MCF 10A (cell line): ENCODE measurements at regions of chr12 and their contacts with region 1.

Region 1: GRCh38 chr12:117212563-117213190 is 22.4 kb upstream of the FBXO21 start:
- DNase-seq: peak; percentile 86
- H3K4me3 Mint-ChIP-seq: no peak overlapping the region
- H3K27ac Mint-ChIP-seq: no peak overlapping the region
- H3K4me1 Mint-ChIP-seq: no peaks in the 10 kb centered on the region
- H3K27me3 Mint-ChIP-seq: peaks cover 70% of the 10 kb centered on the region
- CTCF ChIP-seq: peak; percentile 82

Region 2: DNA sequence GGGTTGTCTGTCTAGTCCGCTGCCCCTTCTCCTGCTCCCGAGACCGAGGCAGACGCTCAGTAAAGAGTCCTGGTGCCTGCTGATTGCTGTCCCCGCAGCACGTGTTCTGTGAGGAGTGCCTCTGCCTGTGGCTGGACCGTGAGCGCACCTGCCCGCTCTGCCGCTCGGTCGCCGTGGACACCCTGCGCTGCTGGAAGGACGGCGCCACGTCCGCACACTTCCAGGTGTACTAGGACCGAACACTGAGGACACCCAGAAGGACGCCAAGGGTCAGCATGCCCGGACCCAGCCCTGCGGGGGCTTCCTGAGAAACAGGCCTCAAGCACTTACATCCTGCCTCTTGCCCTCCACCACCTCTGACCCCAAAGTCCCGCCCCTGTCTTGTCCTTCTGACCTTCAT is 363.5 kb before region 1 on chr12:
- CTCF ChIA-PET with region 1: no interaction called
- POLR2A ChIA-PET with region 1: no interaction called
- intact Hi-C with region 1: no loop called
- DNase-seq: no peak
- H3K4me3 Mint-ChIP-seq: no peak overlapping the region
- H3K27ac Mint-ChIP-seq: no peak overlapping the region
- H3K4me1 Mint-ChIP-seq: no peaks in the 10 kb centered on the region
- H3K27me3 Mint-ChIP-seq: no peaks in the 10 kb centered on the region
- CTCF ChIP-seq: no peak

Region 3: GRCh38 chr12:116910645-116911451 is 301.8 kb before region 1 on chr12 and contains the start of gene FBXW8:
- CTCF ChIA-PET with region 1: no interaction called
- POLR2A ChIA-PET with region 1: no interaction called
- intact Hi-C with region 1: no loop called
- DNase-seq: peak; percentile 62
- H3K4me3 Mint-ChIP-seq: peak within 1 kb of the TSS; percentile 74
- H3K27ac Mint-ChIP-seq: peak within 1 kb of the TSS; percentile 40
- H3K4me1 Mint-ChIP-seq: peaks cover 1% of the 10 kb centered on the region
- H3K27me3 Mint-ChIP-seq: no peaks in the 10 kb centered on the region
- CTCF ChIP-seq: no peak
- total RNA-seq, gene FBXW8: 24.2 and 24.8 TPM in 2 replicates

Region 4: GRCh38 chr12:117202556-117202955 is 10.1 kb before region 1 on chr12:
- CTCF ChIA-PET with region 1: interaction called, 58 read pairs
- POLR2A ChIA-PET with region 1: no interaction called
- intact Hi-C with region 1: no loop called
- DNase-seq: no peak
- H3K4me3 Mint-ChIP-seq: no peak overlapping the region
- H3K27ac Mint-ChIP-seq: no peak overlapping the region
- H3K4me1 Mint-ChIP-seq: no peaks in the 10 kb centered on the region
- H3K27me3 Mint-ChIP-seq: peaks cover 3% of the 10 kb centered on the region
- CTCF ChIP-seq: no peak

Region 5: GRCh38 chr12:117587631-117588287 is 375.1 kb after region 1 on chr12:
- CTCF ChIA-PET with region 1: interaction called, 31 read pairs
- POLR2A ChIA-PET with region 1: no interaction called
- intact Hi-C with region 1: loop called (anchors 5 kb)
- DNase-seq: peak; percentile 65
- H3K4me3 Mint-ChIP-seq: no peak overlapping the region
- H3K27ac Mint-ChIP-seq: no peak overlapping the region
- H3K4me1 Mint-ChIP-seq: no peaks in the 10 kb centered on the region
- H3K27me3 Mint-ChIP-seq: peaks cover 21% of the 10 kb centered on the region
- CTCF ChIP-seq: peak; percentile 78

Region 6: GRCh38 chr12:117662620-117663395 is 450.1 kb after region 1 on chr12:
- CTCF ChIA-PET with region 1: interaction called, 3 read pairs
- POLR2A ChIA-PET with region 1: no interaction called
- intact Hi-C with region 1: loop called (anchors 10 kb)
- DNase-seq: peak; percentile 35
- H3K4me3 Mint-ChIP-seq: no peak overlapping the region
- H3K27ac Mint-ChIP-seq: no peak overlapping the region
- H3K4me1 Mint-ChIP-seq: peaks cover 17% of the 10 kb centered on the region
- H3K27me3 Mint-ChIP-seq: peaks cover 20% of the 10 kb centered on the region
- CTCF ChIP-seq: no peak

Region 7: GRCh38 chr12:117857632-117858612 is 645.2 kb after region 1 on chr12:
- CTCF ChIA-PET with region 1: interaction called, 44 read pairs
- POLR2A ChIA-PET with region 1: no interaction called
- intact Hi-C with region 1: no loop called
- DNase-seq: peak; percentile 65
- H3K4me3 Mint-ChIP-seq: no peak overlapping the region
- H3K27ac Mint-ChIP-seq: no peak overlapping the region
- H3K4me1 Mint-ChIP-seq: no peaks in the 10 kb centered on the region
- H3K27me3 Mint-ChIP-seq: no peaks in the 10 kb centered on the region
- CTCF ChIP-seq: peak; percentile 38